ENCODE measurements at regions of chr3 and their contacts with region 1.

Region 1: GRCh38 chr3:10004960-10005564 is 18.4 kb upstream of the EMC3 start:
- DNase-seq: no peak
- ATAC-seq: no peak
- H3K4me3 Mint-ChIP-seq: no peak overlapping the region
- H3K27ac Mint-ChIP-seq: no peak overlapping the region
- H3K4me1 Mint-ChIP-seq: peaks cover 13% of the 10 kb centered on the region
- H3K27me3 Mint-ChIP-seq: no peaks in the 10 kb centered on the region
- CTCF ChIP-seq: no peak

Region 2: GRCh38 chr3:11248593-11248992 is 1243.5 kb after region 1 on chr3:
- CTCF ChIA-PET with region 1: no interaction called
- POLR2A ChIA-PET with region 1: interaction called, 10 read pairs
- intact Hi-C with region 1: no loop called
- DNase-seq: no peak
- ATAC-seq: no peak
- H3K4me3 Mint-ChIP-seq: no peak overlapping the region
- H3K27ac Mint-ChIP-seq: no peak overlapping the region
- H3K4me1 Mint-ChIP-seq: no peaks in the 10 kb centered on the region
- H3K27me3 Mint-ChIP-seq: peaks cover 13% of the 10 kb centered on the region
- CTCF ChIP-seq: no peak